Activated B cell treated with CpG ODN at 0.5 μM for 24 hours (primary cell): ENCODE measurements at regions of chr1 and their contacts with region 1.

Region 1: DNA sequence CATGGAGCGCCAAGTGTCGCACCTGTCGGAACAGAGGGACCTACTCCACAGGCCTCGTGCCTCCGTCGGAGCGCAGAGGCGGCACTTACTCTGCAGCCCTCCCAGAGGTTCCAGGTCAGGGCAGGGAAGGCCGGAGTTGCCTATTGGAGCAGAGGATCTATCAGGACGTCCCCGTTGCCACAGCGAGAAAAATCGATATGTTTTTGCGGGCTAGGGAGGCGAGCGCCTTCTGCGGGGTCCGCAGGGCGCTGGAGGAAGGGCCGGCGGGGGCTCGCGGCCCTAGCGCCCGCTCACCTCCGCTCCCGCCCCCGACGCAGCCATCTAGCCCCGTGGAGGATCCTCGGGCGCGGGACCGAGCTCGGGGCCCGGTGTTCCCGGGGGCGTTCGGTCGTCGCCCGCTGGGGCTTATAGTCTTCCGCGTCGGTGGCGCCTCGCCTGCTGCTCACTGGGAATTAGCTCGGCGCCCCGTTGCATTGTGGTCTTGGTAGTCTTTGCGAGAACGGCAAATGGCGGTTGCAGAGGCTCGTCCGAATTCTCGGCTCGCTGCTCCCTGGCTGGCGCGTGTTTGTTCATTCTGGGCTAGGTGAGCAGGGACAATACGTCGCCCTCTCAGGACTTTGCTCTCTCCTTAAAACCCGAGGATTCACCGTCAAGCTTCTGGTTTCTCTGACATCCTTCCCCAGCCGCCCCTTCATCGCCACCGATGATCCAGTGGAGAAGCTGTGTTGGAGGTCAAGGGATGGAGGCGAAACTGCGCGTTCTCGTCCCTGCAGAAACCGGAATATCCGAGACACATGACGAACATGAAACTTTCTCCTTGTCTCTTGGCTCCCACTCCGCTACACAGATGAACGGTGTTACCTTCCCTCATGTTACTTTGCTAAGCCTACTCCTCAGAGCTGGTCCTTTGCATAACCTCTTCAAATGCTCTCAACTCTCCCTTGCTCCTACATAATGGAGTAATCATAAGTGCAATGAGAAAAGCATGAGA is at the start of gene JTB:
- DNase-seq: peak; percentile 72
- ATAC-seq: peak; percentile 97
- H3K4me3 Mint-ChIP-seq: peak within 1 kb of the TSS; percentile 98
- H3K27ac Mint-ChIP-seq: peak within 1 kb of the TSS; percentile 97
- H3K4me1 Mint-ChIP-seq: peaks cover 32% of the 10 kb centered on the region
- H3K27me3 Mint-ChIP-seq: no peaks in the 10 kb centered on the region
- CTCF ChIP-seq: no peak
- total RNA-seq, gene JTB: 137 and 147 TPM in 2 replicates

Region 2: DNA sequence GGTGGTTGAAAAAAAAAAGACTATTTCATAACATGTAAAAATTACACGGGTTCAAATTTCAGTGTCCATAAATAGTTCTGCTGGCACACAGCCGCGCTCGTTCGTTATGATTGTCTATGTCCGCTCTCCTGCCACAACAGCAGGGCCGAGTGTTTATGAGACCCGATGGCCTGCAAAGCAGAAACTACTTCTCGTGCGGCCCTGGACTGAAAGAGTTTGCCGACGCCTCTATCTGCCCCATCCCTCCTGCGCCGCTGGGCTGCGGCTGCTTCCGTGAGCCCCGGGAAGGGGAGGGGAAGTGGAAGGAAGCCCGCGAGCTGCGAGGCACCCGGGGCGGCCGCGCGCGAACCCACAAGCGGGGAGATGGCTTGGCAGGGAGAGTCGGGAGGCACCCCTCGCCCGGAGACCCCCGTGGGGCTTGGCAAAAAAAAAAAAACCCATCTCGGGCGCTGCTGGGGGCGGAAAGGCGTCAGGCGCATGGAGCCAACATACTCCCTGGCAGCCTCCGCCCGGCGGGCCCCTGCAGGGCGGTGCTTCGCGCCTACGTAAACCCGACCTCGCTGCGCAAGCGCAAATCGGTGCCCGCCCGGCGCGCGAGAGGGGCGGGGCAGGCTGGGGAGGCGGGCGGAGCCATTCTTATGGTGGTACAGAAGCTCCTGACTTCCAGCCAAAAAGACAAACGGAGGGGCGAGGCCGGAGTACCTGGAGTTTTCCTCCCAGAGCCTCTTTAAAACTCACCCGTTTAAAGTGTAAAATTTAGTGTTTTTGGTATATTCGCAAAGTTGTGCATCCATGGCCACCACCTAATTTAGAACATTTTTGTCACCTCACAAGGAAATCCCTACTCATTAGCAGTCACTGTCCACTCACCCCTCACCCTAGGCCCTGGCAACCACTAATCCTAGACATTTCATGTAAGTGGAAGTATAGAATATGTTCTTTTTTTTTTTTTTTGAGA is 194.0 kb before region 1 on chr1:
- CTCF ChIA-PET with region 1: no interaction called
- POLR2A ChIA-PET with region 1: interaction called, 14 read pairs
- intact Hi-C with region 1: no loop called
- DNase-seq: peak; percentile 92
- ATAC-seq: peak; percentile 96
- H3K4me3 Mint-ChIP-seq: peak overlapping the region; percentile 93
- H3K27ac Mint-ChIP-seq: peak overlapping the region; percentile 96
- H3K4me1 Mint-ChIP-seq: peaks cover 25% of the 10 kb centered on the region
- H3K27me3 Mint-ChIP-seq: no peaks in the 10 kb centered on the region
- CTCF ChIP-seq: no peak

Region 3: GRCh38 chr1:153958111-153958960 is 19.2 kb before region 1 on chr1 and contains the start of gene CRTC2:
- CTCF ChIA-PET with region 1: interaction called, 4 read pairs
- POLR2A ChIA-PET with region 1: interaction called, 230 read pairs
- intact Hi-C with region 1: loop called (anchors 1 kb)
- DNase-seq: peak; percentile 92
- ATAC-seq: peak; percentile 83
- H3K4me3 Mint-ChIP-seq: peak within 1 kb of the TSS; percentile 96
- H3K27ac Mint-ChIP-seq: peak within 1 kb of the TSS; percentile 96
- H3K4me1 Mint-ChIP-seq: peaks cover 77% of the 10 kb centered on the region
- H3K27me3 Mint-ChIP-seq: no peaks in the 10 kb centered on the region
- CTCF ChIP-seq: no peak
- total RNA-seq, gene CRTC2: 206 and 247 TPM in 2 replicates

Region 4: DNA sequence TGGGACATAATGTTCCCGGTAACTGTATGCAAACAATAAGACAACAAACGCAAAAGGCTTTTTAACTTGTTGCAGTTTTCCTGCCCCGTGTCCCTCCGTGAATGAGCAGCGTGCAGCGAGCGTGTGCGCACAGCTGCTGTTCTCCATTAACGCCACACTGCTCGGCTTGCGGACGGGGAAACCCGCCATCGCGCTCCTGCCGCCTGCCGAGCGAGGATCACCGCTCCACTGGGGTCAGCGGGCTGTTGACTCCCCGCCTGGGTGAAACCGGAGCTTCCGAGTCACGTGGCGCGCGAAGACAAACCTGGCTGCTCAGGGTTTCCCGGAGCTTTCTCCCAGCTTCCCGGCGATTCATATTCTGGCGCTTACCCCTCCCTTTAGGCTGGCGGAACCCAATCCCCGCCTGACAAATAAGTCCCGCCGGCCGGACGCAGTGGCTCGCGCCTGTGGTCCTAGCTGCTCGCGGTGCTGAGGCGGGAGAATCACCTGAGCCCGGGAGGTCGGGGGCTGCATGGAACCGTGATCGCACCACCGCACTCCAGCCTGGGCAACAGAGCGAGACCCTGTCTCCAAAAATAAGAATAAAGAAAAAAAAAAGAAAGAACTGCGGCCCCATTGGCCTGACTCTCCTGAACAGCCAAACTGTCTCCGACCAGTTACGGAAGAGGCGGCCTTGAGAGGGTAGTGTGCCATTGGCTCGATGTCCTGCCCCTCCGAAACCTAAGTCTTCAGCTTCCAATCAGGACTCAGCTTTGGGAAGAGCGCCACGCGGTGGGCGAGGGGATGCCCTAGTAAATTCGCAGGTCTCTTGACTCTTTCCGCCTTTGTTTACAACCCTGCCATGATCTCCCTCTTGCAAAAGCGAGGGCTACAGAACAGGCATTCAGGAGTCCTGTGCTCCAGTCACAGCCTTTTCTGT is 10.2 kb before region 1 on chr1 and contains the start of gene CREB3L4:
- CTCF ChIA-PET with region 1: interaction called, 14 read pairs
- POLR2A ChIA-PET with region 1: interaction called, 230 read pairs
- intact Hi-C with region 1: loop called (anchors 1 kb)
- DNase-seq: peak; percentile 72
- ATAC-seq: peak; percentile 85
- H3K4me3 Mint-ChIP-seq: peak within 1 kb of the TSS; percentile 96
- H3K27ac Mint-ChIP-seq: peak within 1 kb of the TSS; percentile 97
- H3K4me1 Mint-ChIP-seq: peaks cover 62% of the 10 kb centered on the region
- H3K27me3 Mint-ChIP-seq: no peaks in the 10 kb centered on the region
- CTCF ChIP-seq: no peak
- total RNA-seq, gene CREB3L4: 9.4 and 10.2 TPM in 2 replicates

Region 5: GRCh38 chr1:154000420-154000819 is 22.9 kb after region 1 on chr1:
- CTCF ChIA-PET with region 1: no interaction called
- POLR2A ChIA-PET with region 1: no interaction called
- intact Hi-C with region 1: no loop called
- DNase-seq: no peak
- ATAC-seq: no peak
- H3K4me3 Mint-ChIP-seq: no peak overlapping the region
- H3K27ac Mint-ChIP-seq: no peak overlapping the region
- H3K4me1 Mint-ChIP-seq: peaks cover under 1% of the 10 kb centered on the region
- H3K27me3 Mint-ChIP-seq: no peaks in the 10 kb centered on the region
- CTCF ChIP-seq: no peak

Region 6: GRCh38 chr1:155437405-155437804 is 1459.9 kb after region 1 on chr1:
- CTCF ChIA-PET with region 1: no interaction called
- POLR2A ChIA-PET with region 1: no interaction called
- intact Hi-C with region 1: no loop called
- DNase-seq: no peak
- ATAC-seq: no peak
- H3K4me3 Mint-ChIP-seq: no peak overlapping the region
- H3K27ac Mint-ChIP-seq: no peak overlapping the region
- H3K4me1 Mint-ChIP-seq: peaks cover 2% of the 10 kb centered on the region
- H3K27me3 Mint-ChIP-seq: no peaks in the 10 kb centered on the region
- CTCF ChIP-seq: no peak